BJ (cell line): ENCODE measurements at regions of chr16 and their contacts with region 1.

Region 1: DNA sequence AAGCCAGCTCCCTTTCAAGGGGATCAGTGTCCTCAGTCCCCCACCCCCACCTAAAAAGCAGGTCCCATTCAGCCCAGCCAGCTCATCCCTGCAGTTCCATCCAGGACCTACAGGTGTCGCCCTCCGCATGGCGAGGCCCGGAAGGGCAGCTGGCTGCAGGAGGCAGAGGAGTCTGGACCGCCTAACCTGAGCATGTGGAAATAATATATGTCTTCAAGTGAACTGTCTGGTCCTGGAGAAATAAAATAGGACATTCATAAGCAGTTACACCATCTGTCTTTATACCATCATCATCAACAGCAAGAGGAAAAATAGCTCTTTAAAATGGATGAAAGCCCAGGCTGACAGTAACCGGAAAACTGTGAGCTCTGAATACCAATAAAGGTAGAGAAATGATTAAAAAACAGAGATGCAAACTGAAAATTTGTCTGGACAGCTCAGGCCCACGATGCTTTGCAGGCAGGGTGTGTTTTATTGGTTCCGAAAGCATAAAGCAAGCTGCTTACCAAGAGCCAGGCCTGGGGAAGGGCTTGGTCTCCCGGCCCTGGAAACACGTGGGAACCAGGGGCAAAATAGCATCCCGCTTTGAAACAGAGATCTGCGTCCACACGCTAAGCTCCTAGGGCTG is 215.2 kb downstream of the ZFHX3 start:
- DNase-seq: peak; percentile 37
- H3K4me3 ChIP-seq: no peak overlapping the region
- H3K27me3 ChIP-seq: no peaks in the 10 kb centered on the region
- CTCF ChIP-seq: peak; percentile 100

Region 2: GRCh38 chr16:72788269-72788809 is 44.4 kb before region 1 on chr16:
- CTCF ChIA-PET with region 1: no interaction called
- POLR2A ChIA-PET with region 1: no interaction called
- DNase-seq: no peak
- H3K4me3 ChIP-seq: no peak overlapping the region; the same call in 1 of the 2 replicates
- H3K27me3 ChIP-seq: no peaks in the 10 kb centered on the region
- CTCF ChIP-seq: no peak

Region 3: DNA sequence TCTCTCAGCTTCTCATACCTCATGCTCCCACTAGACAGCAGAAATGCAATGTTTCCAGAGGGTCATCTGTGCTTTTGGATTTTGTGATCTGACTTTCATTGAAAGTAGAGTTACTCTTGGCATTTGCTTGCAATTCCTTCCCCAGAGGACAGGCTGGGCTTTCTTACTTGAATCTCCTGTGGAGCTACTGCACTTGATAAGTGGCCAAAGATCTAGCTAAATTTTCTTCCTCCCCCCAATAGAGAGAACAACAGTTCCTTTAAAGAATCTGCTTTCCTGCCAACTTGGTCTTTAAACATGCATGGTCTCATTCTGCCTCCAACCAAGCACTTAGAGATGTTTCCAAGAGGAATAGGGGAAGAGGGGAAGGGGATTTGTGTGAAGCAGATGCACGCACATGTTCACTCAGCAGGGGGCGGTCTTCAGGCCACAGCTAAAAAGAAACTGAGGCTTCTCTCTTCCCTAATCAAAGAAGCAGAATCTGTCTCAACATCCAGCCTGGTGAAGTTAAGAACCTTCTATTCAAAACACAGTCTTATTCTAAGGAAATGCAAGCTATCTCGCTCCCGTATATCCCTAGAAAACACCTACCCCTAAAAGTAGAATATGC is 14.4 kb before region 1 on chr16:
- CTCF ChIA-PET with region 1: interaction called, 25 read pairs
- POLR2A ChIA-PET with region 1: no interaction called
- DNase-seq: no peak
- H3K4me3 ChIP-seq: no peak overlapping the region
- H3K27me3 ChIP-seq: no peaks in the 10 kb centered on the region
- CTCF ChIP-seq: peak; percentile 20; the same call in 1 of the 2 replicates

Region 4: GRCh38 chr16:72856797-72857196 is 24.1 kb after region 1 on chr16:
- CTCF ChIA-PET with region 1: interaction called, 11 read pairs
- POLR2A ChIA-PET with region 1: no interaction called
- DNase-seq: no peak
- H3K4me3 ChIP-seq: no peak overlapping the region
- H3K27me3 ChIP-seq: no peaks in the 10 kb centered on the region
- CTCF ChIP-seq: peak; percentile 33

Region 5: DNA sequence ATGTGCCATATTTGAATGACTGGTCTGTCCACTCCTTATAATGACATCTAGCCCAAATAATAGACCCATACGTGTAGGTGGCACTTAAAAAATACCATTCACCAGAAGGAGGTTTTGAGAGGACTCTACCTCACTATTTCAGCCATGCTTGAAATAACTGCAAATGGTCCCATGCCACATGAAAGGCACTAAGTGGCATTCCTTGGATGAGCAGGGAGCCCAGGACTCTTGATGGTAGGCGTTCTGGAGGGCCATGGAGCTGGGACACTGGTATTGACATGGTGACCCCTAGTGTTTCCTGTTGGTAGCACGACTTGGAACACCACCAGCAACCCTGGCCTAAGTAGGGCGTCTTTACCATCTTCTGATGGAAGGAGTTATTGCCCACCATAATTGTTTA is 363.9 kb after region 1 on chr16:
- CTCF ChIA-PET with region 1: interaction called, 11 read pairs
- POLR2A ChIA-PET with region 1: no interaction called
- DNase-seq: no peak
- H3K4me3 ChIP-seq: no peak overlapping the region
- H3K27me3 ChIP-seq: no peaks in the 10 kb centered on the region
- CTCF ChIP-seq: peak; percentile 60